Activated CD4-positive, alpha-beta T cell treated with anti-CD3 and anti-CD28 coated beads for 36 hours (primary cell): ENCODE measurements at regions of chr5 and their contacts with region 1.

Region 1: DNA sequence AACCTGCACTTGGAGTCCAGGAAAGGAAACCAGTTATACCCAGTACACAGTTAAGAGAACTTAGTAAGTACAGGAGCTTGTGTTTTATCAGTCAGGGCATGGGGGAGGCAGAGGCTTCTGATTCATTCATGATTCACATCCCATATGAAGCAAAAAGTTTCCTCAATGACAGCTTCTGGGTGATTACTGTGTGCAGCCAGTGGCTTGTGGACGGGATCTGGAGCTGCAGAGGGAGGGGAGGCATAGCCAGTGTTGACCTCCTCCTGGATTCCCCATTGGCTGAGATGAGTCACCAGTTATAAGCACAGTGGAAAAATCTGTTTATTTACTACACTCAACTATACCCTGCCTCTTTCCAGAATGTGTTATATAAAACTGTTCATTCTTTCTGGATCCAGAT is 17.7 kb downstream of the IL31RA start:
- DNase-seq: peak; percentile 79
- ATAC-seq: peak; percentile 97
- H3K4me3 Mint-ChIP-seq: no peak overlapping the region
- H3K27ac Mint-ChIP-seq: no peak overlapping the region
- H3K4me1 Mint-ChIP-seq: peaks cover 31% of the 10 kb centered on the region
- H3K27me3 Mint-ChIP-seq: no peaks in the 10 kb centered on the region

Region 2: DNA sequence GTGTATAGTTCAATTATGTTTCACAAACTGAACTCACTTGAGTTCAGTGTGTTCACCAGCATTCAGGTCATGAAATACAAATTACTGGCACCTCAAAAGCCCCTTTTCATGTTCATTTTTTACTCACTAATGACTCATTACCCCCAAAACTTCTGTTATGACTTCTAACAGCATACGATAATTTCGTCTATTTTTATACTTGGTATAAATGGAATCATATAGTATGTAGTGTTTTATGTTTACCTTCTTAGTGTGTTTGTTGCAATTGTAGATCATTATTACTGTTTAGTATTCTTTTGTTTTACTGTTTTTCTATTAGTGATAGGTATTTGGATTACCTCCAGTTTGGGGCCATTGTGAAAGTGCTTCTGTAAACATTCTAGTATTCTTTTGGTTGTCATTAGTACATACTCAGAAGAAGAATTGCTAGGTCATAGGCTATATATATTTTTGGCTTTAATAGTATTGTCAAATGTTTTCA is 97.6 kb before region 1 on chr5:
- CTCF ChIA-PET with region 1: no interaction called
- POLR2A ChIA-PET with region 1: no interaction called
- intact Hi-C with region 1: loop called in 1 of 2 experiments (anchors 2 kb)
- DNase-seq: no peak
- ATAC-seq: peak; percentile 93
- H3K4me3 Mint-ChIP-seq: no peak overlapping the region
- H3K27ac Mint-ChIP-seq: no peak overlapping the region
- H3K4me1 Mint-ChIP-seq: peaks cover 13% of the 10 kb centered on the region
- H3K27me3 Mint-ChIP-seq: peaks cover 11% of the 10 kb centered on the region

Region 3: DNA sequence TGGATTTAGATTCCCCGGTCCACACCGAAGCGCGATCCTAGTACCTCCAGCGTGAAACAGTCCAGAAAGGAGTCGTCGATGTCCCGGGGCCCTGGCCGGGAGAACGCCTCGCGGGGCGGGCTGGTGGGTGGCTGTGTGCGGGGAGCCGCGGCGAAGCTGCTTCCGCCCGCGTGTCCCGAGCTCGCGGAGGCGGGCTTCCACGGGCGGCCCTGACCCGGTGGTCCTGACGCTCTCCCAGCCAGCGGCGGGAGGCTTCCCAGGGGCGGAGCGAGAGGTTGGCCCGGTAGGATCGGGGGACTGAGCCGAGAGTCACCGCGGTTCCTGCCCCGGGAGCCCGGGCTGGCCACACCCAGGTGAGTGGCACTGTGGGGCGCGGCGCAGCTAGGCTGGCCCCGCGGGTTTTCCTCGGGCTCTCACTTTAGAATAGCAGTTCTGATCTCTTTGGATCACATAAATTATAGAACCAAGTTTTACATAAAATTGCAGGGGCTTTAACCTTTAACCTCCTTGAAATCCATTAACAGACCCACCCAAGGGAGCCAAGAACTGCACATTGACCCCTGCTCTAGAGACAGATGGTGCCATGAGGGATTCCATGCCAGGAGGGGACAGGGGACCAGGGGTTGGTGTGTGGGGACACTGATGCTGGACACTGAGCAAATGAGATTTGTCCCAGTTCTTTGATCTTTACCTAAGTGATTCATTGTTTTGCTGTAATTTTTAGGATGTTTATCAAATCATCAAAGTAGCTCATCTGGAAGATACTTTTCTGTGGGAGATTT is 46.9 kb before region 1 on chr5:
- CTCF ChIA-PET with region 1: no interaction called
- POLR2A ChIA-PET with region 1: no interaction called
- intact Hi-C with region 1: loop called in 1 of 2 experiments (anchors 2 kb)
- DNase-seq: peak; percentile 18
- ATAC-seq: no peak
- H3K4me3 Mint-ChIP-seq: peak overlapping the region; percentile 20
- H3K27ac Mint-ChIP-seq: no peak overlapping the region
- H3K4me1 Mint-ChIP-seq: peaks cover 9% of the 10 kb centered on the region
- H3K27me3 Mint-ChIP-seq: peaks cover 52% of the 10 kb centered on the region

Region 4: DNA sequence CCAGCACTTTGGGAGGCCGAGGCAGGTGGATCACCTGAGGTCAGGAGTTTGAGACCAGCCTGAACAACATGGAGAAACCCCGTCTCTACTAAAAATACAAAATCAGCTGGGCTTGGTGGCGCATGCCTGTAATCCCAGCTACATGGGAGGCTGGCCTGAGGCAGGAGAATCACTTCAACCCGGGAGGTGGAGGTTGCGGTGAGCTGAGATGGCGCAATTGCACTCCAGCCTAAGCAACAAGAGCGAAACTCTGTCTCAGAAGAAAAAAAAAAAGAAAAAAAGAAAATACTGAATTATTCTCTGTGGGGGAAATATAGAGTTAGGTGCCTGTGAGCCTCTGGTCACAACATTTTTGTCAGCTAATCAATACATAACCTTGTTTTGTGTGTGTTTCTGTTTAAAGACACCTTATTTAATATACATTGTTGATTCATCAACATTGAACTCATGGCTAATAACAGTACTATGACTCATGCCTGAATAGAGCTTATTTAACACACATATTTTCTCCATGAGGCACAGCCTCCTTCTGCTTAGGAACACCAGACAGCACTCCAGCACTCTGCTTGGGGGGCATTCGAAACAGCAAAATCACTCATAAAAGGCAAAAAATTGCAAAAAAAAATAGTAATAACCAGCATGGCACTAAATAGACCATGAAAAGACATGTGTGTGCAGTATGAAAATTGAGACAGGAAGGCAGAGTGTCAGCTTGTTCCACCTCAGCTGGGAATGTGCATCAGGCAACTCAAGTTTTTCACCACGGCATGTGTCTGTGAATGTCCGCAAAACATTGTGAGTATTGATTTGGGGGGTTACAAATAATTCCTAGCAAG is 17.8 kb before region 1 on chr5 and contains the start of gene IL31RA:
- CTCF ChIA-PET with region 1: interaction called, 3 read pairs
- POLR2A ChIA-PET with region 1: interaction called, 4 read pairs
- intact Hi-C with region 1: loop called (anchors 1 kb)
- DNase-seq: no peak
- ATAC-seq: peak; percentile 82
- H3K4me3 Mint-ChIP-seq: no peak within 1 kb of the TSS
- H3K27ac Mint-ChIP-seq: no peak within 1 kb of the TSS
- H3K4me1 Mint-ChIP-seq: peaks cover 30% of the 10 kb centered on the region
- H3K27me3 Mint-ChIP-seq: peaks cover 8% of the 10 kb centered on the region
- total RNA-seq, gene IL31RA: not detected

Region 5: GRCh38 chr5:55856516-55857246 is 12.2 kb before region 1 on chr5:
- CTCF ChIA-PET with region 1: interaction called, 3 read pairs
- POLR2A ChIA-PET with region 1: interaction called, 4 read pairs
- intact Hi-C with region 1: loop called (anchors 1 kb)
- DNase-seq: peak; percentile 38
- ATAC-seq: peak; percentile 80
- H3K4me3 Mint-ChIP-seq: no peak overlapping the region
- H3K27ac Mint-ChIP-seq: peak overlapping the region; percentile 70
- H3K4me1 Mint-ChIP-seq: peaks cover 35% of the 10 kb centered on the region
- H3K27me3 Mint-ChIP-seq: peaks cover 2% of the 10 kb centered on the region

Region 6: DNA sequence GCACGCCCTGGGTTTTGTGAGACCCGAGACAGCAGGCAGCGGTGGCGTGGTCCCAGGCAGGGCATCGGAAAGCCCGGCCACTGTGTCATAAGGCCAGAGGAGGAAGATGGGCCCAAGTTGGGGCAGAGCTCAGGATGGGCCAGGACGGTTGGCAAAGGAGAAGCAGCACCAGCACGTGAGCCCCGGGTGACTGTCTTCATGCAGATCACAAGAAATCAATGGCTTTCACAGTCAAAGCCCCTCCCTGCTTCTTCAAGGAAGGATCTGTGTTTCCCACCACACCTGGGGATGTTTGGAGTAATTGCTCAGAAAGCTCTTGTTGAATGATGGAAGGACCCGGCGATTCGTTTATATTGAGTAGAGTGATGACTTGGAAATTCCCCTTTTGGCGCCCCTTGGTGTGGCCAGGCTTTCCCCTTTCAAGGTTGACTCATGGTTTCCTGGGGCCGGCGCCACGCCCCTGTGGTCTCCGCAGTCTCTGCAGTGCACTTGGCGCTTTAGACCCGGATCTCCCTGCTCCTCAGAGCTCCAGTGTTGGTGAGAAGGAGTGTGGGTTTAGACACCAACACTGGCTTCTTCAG is 34.4 kb after region 1 on chr5:
- CTCF ChIA-PET with region 1: no interaction called
- POLR2A ChIA-PET with region 1: no interaction called
- intact Hi-C with region 1: loop called in 1 of 2 experiments (anchors 1 kb)
- DNase-seq: peak; percentile 86
- ATAC-seq: peak; percentile 89
- H3K4me3 Mint-ChIP-seq: no peak overlapping the region
- H3K27ac Mint-ChIP-seq: peak overlapping the region; percentile 13
- H3K4me1 Mint-ChIP-seq: peaks cover 33% of the 10 kb centered on the region
- H3K27me3 Mint-ChIP-seq: peaks cover 11% of the 10 kb centered on the region